ENCODE measurements at regions of chr7 and their contacts with region 1.

Region 1: DNA sequence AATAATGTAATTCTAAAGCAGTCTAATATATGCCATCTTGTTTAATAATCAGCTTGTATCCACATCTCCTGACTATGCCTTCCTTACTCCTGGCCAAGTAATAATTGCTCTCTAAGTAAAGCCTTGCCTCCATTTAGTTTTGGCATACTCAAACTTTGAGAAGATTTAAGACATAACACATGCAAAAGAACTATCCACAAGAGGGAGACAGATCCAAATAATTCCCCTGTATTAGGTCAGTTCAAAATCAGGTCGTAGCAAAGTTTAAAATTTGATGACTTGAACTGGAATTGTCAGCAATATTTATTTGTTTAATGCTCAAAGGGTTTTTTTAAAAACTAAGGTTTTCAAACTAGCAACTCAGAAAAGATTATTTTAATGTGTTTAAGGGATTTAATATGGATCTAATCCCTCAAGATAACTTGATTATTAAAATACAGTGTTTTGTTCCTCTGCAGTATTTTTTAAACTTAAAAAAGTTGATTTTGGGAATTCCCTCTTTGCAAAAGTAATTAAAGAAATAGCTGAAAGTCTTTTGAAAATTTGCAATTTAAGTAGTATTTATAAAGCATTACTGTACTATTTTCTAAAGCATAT is 95.3 kb downstream of the HDAC9 start:
- DNase-seq: no peak
- ATAC-seq: peak in 1 of 4 donors; percentile 51
- H3K4me3 ChIP-seq: no peak overlapping the region
- H3K27ac ChIP-seq: no peak overlapping the region
- H3K4me1 ChIP-seq: no peaks in the 10 kb centered on the region
- H3K27me3 ChIP-seq: no peaks in the 10 kb centered on the region
- CTCF ChIP-seq: peak; percentile 50

Region 2: GRCh38 chr7:18202315-18203045 is 388.4 kb before region 1 on chr7:
- intact Hi-C with region 1: no loop called
- DNase-seq: no peak
- ATAC-seq: no peak
- H3K4me3 ChIP-seq: no peak overlapping the region
- H3K27ac ChIP-seq: no peak overlapping the region
- H3K4me1 ChIP-seq: no peaks in the 10 kb centered on the region
- H3K27me3 ChIP-seq: no peaks in the 10 kb centered on the region
- CTCF ChIP-seq: no peak

Region 3: GRCh38 chr7:18655912-18656311 is 65.1 kb after region 1 on chr7:
- intact Hi-C with region 1: loop called in 1 of 2 experiments (anchors 5 kb)
- DNase-seq: no peak
- ATAC-seq: no peak
- H3K4me3 ChIP-seq: no peak overlapping the region
- H3K27ac ChIP-seq: no peak overlapping the region
- H3K4me1 ChIP-seq: no peaks in the 10 kb centered on the region
- H3K27me3 ChIP-seq: no peaks in the 10 kb centered on the region
- CTCF ChIP-seq: no peak